Activated naive CD4-positive, alpha-beta T cell treated with anti-CD3 and anti-CD28 coated beads for 36 hours (primary cell): ENCODE measurements at regions of chr5 and their contacts with region 1.

Region 1: DNA sequence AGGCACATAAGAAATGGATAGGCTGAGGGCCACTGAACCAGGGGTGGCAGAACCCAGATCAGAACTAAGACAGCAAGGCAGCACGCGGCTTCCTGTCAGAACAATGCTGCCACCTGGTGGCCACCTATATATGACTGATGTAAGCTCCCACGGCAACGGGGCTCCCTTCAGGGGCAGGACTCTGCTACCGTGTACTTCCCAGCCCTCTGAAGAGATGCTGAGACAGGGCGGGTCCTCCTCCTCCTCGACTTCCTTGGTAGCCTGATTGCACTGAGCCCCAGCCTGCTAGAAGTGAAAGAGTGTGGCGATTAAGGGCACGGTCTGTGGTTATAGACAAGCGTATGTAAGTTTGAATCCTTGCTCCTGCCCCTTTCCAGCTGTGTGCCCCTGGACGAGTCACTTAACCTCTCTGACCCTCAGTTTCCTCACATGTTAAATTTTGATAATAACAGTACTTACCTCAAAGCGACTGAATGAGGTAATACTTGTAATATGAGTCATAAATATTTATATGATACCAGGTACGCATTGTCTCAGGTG is 13.3 kb downstream of the RPS14 start:
- DNase-seq: peak; percentile 95
- H3K4me3 Mint-ChIP-seq: no peak overlapping the region
- H3K27ac Mint-ChIP-seq: no peak overlapping the region
- H3K4me1 Mint-ChIP-seq: peaks cover 8% of the 10 kb centered on the region
- H3K27me3 Mint-ChIP-seq: no peaks in the 10 kb centered on the region

Region 2: DNA sequence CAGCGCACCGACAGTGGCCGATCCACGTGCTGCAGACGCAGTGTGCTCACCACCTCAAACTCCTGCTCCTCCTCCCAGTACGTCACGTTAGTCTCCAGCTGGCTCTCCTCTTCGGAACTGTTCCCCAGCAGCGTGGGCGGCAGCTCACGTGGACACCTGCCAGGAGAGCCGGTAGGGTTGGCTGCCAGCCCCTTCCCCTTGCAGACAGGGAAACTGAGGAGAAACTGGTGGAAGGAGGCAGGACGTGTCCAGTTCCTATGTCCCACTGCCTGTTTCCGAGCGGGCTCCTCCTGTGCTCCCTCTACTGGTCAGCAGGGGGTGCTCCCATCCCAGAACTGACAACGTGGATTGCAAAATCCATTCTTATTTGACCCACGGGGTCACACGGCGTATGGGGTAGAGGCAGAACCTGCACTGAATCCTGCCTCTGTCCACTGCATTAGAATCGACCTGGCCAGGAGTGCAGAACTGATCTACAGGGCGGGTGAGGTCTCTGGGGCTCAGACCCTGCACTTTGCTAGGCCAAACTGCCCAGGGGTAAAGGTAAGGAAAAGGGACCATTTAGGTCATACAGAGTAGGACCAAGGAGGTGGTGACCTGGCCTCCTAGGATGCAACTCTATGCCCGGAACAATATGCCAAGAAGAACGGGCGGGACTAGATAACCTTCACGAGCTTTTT is 306.3 kb before region 1 on chr5:
- CTCF ChIA-PET with region 1: no interaction called
- intact Hi-C with region 1: loop called (anchors 1 kb)
- DNase-seq: peak; percentile 67
- H3K4me3 Mint-ChIP-seq: no peak overlapping the region
- H3K27ac Mint-ChIP-seq: no peak overlapping the region
- H3K4me1 Mint-ChIP-seq: no peaks in the 10 kb centered on the region
- H3K27me3 Mint-ChIP-seq: no peaks in the 10 kb centered on the region

Region 3: GRCh38 chr5:150217873-150218692 is 218.1 kb before region 1 on chr5:
- CTCF ChIA-PET with region 1: interaction called, 3 read pairs
- intact Hi-C with region 1: loop called (anchors 5 kb)
- DNase-seq: peak; percentile 91
- H3K4me3 Mint-ChIP-seq: no peak overlapping the region
- H3K27ac Mint-ChIP-seq: no peak overlapping the region
- H3K4me1 Mint-ChIP-seq: no peaks in the 10 kb centered on the region
- H3K27me3 Mint-ChIP-seq: peaks cover 4% of the 10 kb centered on the region

Region 4: DNA sequence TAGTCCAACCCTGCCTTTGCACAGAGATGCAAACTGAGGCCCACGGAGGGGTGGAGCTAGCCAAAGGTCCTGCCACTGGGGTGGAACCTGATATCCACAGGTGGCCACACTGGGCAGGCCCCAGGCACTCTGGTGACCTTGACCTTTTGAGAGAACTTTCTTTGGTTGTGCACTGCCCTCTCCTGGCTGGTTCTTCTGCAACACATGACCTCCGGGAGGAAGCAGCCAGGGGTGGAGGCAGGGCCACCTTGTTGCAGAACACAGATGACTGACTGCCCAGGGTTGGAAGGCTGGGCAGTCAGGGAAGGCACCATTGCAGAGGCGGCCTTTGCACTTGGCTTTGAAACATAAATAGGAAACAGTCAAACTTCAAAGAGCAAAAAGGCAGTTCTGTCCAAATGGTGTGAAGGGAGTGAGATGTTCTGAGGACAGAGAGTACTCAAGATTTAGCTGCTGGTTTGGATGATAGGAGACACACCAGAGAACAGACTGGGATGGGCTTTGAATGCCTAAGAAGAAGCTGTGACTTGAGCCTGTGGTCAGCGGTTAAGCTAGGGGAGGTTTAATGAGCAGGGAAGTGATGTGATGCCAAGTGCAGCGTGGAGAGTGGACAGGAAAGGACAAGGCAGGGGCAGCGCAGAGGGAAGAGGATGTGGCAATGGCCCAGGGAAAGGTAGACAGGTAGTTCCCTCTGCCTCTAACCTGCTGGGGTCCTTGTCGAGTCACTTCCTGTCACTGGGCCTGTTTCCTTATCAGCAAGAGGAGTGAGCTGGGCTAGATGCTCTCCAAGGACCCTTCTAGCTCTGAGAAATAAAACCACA is 85.5 kb before region 1 on chr5:
- CTCF ChIA-PET with region 1: no interaction called
- intact Hi-C with region 1: loop called (anchors 1 kb)
- DNase-seq: peak; percentile 81
- H3K4me3 Mint-ChIP-seq: no peak overlapping the region
- H3K27ac Mint-ChIP-seq: peak overlapping the region; percentile 28
- H3K4me1 Mint-ChIP-seq: peaks cover 8% of the 10 kb centered on the region
- H3K27me3 Mint-ChIP-seq: no peaks in the 10 kb centered on the region

Region 5: GRCh38 chr5:150394912-150395687 is 41.1 kb before region 1 on chr5:
- CTCF ChIA-PET with region 1: interaction called, 6 read pairs
- intact Hi-C with region 1: loop called (anchors 1 kb)
- DNase-seq: no peak
- H3K4me3 Mint-ChIP-seq: no peak overlapping the region
- H3K27ac Mint-ChIP-seq: peak overlapping the region; percentile 36
- H3K4me1 Mint-ChIP-seq: no peaks in the 10 kb centered on the region
- H3K27me3 Mint-ChIP-seq: no peaks in the 10 kb centered on the region